Mammary epithelial cell (primary cell): ENCODE measurements at regions of chr3 and their contacts with region 1.

Region 1: DNA sequence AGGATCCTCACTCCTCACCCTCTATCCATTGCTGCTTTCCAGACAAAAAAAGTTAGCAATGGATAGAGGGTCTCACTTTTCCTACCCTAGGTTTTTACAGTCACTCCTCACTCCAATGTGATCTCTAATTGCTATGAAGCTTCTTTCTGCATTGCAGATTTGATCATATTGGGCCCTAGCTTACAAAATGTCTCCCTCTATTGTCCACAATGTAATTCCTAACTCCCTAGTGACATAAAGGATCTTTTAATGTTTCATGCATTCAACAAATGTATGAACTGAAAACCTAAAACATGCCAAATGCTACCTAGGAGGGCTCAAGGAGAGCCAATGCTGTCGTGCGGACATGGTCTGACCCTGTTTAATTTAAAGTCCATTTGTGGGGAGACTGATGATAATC is 234.8 kb downstream of the CADM2 start:
- DNase-seq: no peak
- H3K4me3 ChIP-seq: no peak overlapping the region
- H3K27ac ChIP-seq: no peak overlapping the region
- H3K4me1 ChIP-seq: no peaks in the 10 kb centered on the region
- H3K27me3 ChIP-seq: peaks cover 2% of the 10 kb centered on the region
- CTCF ChIP-seq: peak in 1 of 2 donors; percentile 63

Region 2: GRCh38 chr3:84547971-84548970 is 645.3 kb before region 1 on chr3:
- CTCF ChIA-PET with region 1: no interaction called
- dilution Hi-C with region 1: no loop called
- in situ Hi-C with region 1: no loop called
- intact Hi-C with region 1: loop called (anchors 2 kb)
- DNase-seq: peak; percentile 16
- H3K4me3 ChIP-seq: no peak overlapping the region
- H3K27ac ChIP-seq: no peak overlapping the region
- H3K4me1 ChIP-seq: no peaks in the 10 kb centered on the region
- H3K27me3 ChIP-seq: no peaks in the 10 kb centered on the region
- CTCF ChIP-seq: peak; percentile 44 to 58

Region 3: GRCh38 chr3:84974347-84974746 is 219.2 kb before region 1 on chr3:
- CTCF ChIA-PET with region 1: no interaction called
- dilution Hi-C with region 1: no loop called
- in situ Hi-C with region 1: no loop called
- intact Hi-C with region 1: loop called (anchors 1 kb)
- DNase-seq: no peak
- H3K4me3 ChIP-seq: no peak overlapping the region
- H3K27ac ChIP-seq: no peak overlapping the region
- H3K4me1 ChIP-seq: no peaks in the 10 kb centered on the region
- H3K27me3 ChIP-seq: no peaks in the 10 kb centered on the region
- CTCF ChIP-seq: peak in 1 of 2 donors; percentile 22

Region 4: GRCh38 chr3:85110393-85110792 is 83.2 kb before region 1 on chr3:
- CTCF ChIA-PET with region 1: no interaction called
- dilution Hi-C with region 1: no loop called
- in situ Hi-C with region 1: no loop called
- intact Hi-C with region 1: loop called (anchors 1 kb)
- DNase-seq: no peak
- H3K4me3 ChIP-seq: no peak overlapping the region
- H3K27ac ChIP-seq: no peak overlapping the region
- H3K4me1 ChIP-seq: no peaks in the 10 kb centered on the region
- H3K27me3 ChIP-seq: no peaks in the 10 kb centered on the region
- CTCF ChIP-seq: peak in 1 of 2 donors; percentile 23